Heart right ventricle (tissue), 16 donors: ENCODE measurements at regions of chr15 and their contacts with region 1.

Region 1: GRCh38 chr15:97791824-97792792 is 168.4 kb upstream of the ARRDC4 start:
- DNase-seq: no peak
- ATAC-seq: peak in 1 of 8 donors; percentile 33
- H3K4me3 ChIP-seq: no peak overlapping the region
- H3K27ac ChIP-seq: no peak overlapping the region
- H3K4me1 ChIP-seq: no peaks in the 10 kb centered on the region
- H3K27me3 ChIP-seq: no peaks in the 10 kb centered on the region
- CTCF ChIP-seq: no peak

Region 2: GRCh38 chr15:97858296-97858695 is 66.2 kb after region 1 on chr15:
- intact Hi-C with region 1: loop called in 1 of 10 experiments (anchors 10 kb)
- DNase-seq: no peak
- ATAC-seq: no peak
- H3K4me3 ChIP-seq: no peak overlapping the region
- H3K27ac ChIP-seq: no peak overlapping the region
- H3K4me1 ChIP-seq: no peaks in the 10 kb centered on the region
- H3K27me3 ChIP-seq: no peaks in the 10 kb centered on the region
- CTCF ChIP-seq: no peak